Gastrocnemius medialis (tissue), 4 donors: ENCODE measurements at regions of chr5 and their contacts with region 1.

Region 1: DNA sequence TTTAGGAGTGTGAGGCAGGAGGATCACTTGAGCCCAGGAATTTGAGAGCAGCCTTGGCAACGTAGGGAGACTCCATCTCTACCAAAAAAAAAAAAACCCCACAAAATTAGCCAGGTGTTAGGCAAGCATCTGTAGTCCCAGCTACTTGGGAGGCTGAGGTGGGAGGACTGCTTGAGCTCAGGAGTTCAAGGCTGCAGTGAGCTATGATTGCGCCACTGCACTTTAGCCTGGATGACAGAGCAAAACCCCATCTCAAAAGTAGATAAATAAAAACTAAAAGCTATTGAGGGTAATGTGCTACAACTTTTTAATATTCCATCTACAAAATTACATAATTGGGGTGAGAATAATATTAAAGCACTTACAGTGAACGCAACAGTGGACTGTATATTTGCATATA is 5.9 kb downstream of the BDP1 start:
- DNase-seq: no peak
- ATAC-seq: no peak
- H3K4me3 ChIP-seq: no peak overlapping the region
- H3K27ac ChIP-seq: no peak overlapping the region
- H3K4me1 ChIP-seq: peaks cover 15 to 16% of the 10 kb centered on the region in 2 donors
- H3K27me3 ChIP-seq: no peaks in the 10 kb centered on the region
- CTCF ChIP-seq: no peak
- POLR2A ChIP-seq: no peak

Region 2: DNA sequence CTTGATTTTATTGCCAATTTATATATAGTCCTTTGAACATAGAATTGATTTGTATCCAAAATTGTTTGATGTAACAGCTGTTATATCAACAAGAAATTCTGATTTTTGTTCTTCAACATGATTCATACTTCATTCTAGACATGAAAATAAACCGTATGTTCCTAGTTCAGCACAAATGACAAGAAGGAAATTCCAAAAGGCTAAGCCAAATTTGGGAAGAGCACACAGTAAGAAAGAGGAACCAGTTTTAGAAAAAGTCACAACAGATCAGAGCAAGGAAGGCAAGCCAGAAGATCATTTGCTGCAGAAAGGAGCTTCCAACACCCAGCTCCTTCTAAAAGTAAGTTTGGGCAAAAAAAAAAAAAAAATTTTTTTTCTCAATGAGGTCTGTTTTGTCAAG is 60.8 kb after region 1 on chr5:
- in situ Hi-C with region 1: loop called in 1 of 4 experiments (anchors 10 kb)
- intact Hi-C with region 1: no loop called
- DNase-seq: no peak
- ATAC-seq: no peak
- H3K4me3 ChIP-seq: no peak overlapping the region
- H3K27ac ChIP-seq: no peak overlapping the region
- H3K4me1 ChIP-seq: no peaks in the 10 kb centered on the region
- H3K27me3 ChIP-seq: no peaks in the 10 kb centered on the region
- CTCF ChIP-seq: no peak
- POLR2A ChIP-seq: no peak